Caco-2 (cell line): ENCODE measurements at regions of chr12 and their contacts with region 1.

Region 1: DNA sequence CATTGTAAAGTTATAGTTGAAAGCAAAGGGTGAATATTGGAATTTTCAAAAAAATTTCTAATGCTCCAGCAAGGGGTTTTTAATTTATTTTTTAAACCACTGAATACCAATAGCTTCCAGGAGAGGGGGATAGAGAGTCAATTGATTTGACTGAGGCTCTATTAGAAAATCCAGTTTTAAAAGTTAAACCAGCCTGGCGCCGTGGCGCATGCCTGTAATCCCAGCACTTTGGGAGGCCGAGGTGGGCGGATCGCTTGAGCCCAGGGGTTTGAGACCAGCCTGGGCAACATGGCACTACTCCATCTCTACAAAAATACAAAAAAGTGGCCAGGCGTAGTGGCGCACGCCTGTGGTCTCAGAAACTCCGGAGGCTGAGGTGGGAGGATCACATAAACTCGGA is 150.1 kb downstream of the SLC38A4 start:
- DNase-seq: peak in 1 of 2 experiments; percentile 66
- H3K4me3 ChIP-seq: no peak overlapping the region
- H3K4me3 Mint-ChIP-seq: no peak overlapping the region
- H3K27ac Mint-ChIP-seq: no peak overlapping the region
- H3K4me1 ChIP-seq: peaks cover 7% of the 10 kb centered on the region; the same call in 1 of the 2 replicates
- H3K4me1 Mint-ChIP-seq: peaks cover 7% of the 10 kb centered on the region
- H3K27me3 ChIP-seq: no peaks in the 10 kb centered on the region; the same call in 1 of the 2 replicates
- H3K27me3 Mint-ChIP-seq: no peaks in the 10 kb centered on the region
- CTCF ChIP-seq: peak; percentile 64 to 88

Region 2: DNA sequence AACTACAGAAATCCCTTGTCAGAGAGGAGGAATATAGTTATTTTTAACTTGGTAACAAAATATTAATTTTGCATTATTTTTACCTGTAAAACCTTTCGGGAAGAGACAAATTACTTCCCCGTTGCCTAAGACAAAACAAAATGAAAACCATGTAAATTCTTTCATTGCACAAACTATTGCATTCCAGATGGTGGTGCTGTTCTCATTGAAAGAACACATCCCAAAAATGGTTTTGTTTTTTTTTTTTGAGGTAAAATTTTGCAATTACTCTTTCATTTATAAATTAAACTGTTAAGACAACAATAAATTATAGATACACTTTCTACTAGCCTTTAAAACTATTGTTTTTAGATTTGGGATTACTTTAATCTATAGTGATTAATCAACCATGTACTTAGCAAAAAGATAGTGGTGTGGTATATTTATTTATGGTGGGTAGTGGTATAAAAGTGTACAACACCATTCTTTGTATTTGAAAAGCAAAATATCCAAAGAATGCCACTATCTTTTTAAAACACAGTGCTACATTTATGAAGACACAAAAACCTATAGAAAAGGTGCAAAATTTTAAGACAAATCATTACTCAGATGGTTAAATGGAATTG is 522.4 kb before region 1 on chr12:
- CTCF ChIA-PET with region 1: no interaction called
- POLR2A ChIA-PET with region 1: no interaction called
- intact Hi-C with region 1: loop called (anchors 5 kb)
- DNase-seq: no peak
- H3K4me3 ChIP-seq: no peak overlapping the region
- H3K4me3 Mint-ChIP-seq: no peak overlapping the region
- H3K27ac Mint-ChIP-seq: no peak overlapping the region
- H3K4me1 ChIP-seq: 0 out of 2 replicates have a peak, but pooled peaks cover 5% of the 10 kb centered on the region
- H3K4me1 Mint-ChIP-seq: peaks cover 17% of the 10 kb centered on the region
- H3K27me3 ChIP-seq: no peaks in the 10 kb centered on the region
- H3K27me3 Mint-ChIP-seq: peaks cover 9% of the 10 kb centered on the region
- CTCF ChIP-seq: peak; percentile 53 to 70

Region 3: GRCh38 chr12:46722394-46723185 is 46.9 kb after region 1 on chr12:
- CTCF ChIA-PET with region 1: no interaction called
- POLR2A ChIA-PET with region 1: no interaction called
- intact Hi-C with region 1: no loop called
- DNase-seq: no peak
- H3K4me3 ChIP-seq: no peak overlapping the region
- H3K4me3 Mint-ChIP-seq: no peak overlapping the region
- H3K27ac Mint-ChIP-seq: no peak overlapping the region
- H3K4me1 ChIP-seq: no peaks in the 10 kb centered on the region
- H3K4me1 Mint-ChIP-seq: no peaks in the 10 kb centered on the region
- H3K27me3 ChIP-seq: no peaks in the 10 kb centered on the region
- H3K27me3 Mint-ChIP-seq: no peaks in the 10 kb centered on the region
- CTCF ChIP-seq: no peak

Region 4: GRCh38 chr12:46825591-46826414 is 150.1 kb after region 1 on chr12 and contains the start of gene SLC38A4:
- CTCF ChIA-PET with region 1: interaction called, 3 read pairs
- POLR2A ChIA-PET with region 1: no interaction called
- intact Hi-C with region 1: loop called (anchors 5 kb)
- DNase-seq: peak; percentile 67 to 84
- H3K4me3 ChIP-seq: peak within 1 kb of the TSS; percentile 65
- H3K4me3 Mint-ChIP-seq: peak within 1 kb of the TSS; percentile 77
- H3K27ac Mint-ChIP-seq: peak within 1 kb of the TSS; percentile 11
- H3K4me1 ChIP-seq: no peaks in the 10 kb centered on the region; the same call in 1 of the 2 replicates
- H3K4me1 Mint-ChIP-seq: peaks cover 21% of the 10 kb centered on the region
- H3K27me3 ChIP-seq: no peaks in the 10 kb centered on the region
- H3K27me3 Mint-ChIP-seq: no peaks in the 10 kb centered on the region
- CTCF ChIP-seq: peak in 1 of 2 experiments; percentile 56
- total RNA-seq, gene SLC38A4: 16.0 and 20.1 TPM in 2 replicates

Region 5: GRCh38 chr12:46983393-46984266 is 307.9 kb after region 1 on chr12:
- CTCF ChIA-PET with region 1: interaction called, 3 read pairs
- POLR2A ChIA-PET with region 1: no interaction called
- intact Hi-C with region 1: loop called (anchors 1 kb)
- DNase-seq: peak; percentile 65 to 66
- H3K4me3 ChIP-seq: no peak overlapping the region
- H3K4me3 Mint-ChIP-seq: no peak overlapping the region
- H3K27ac Mint-ChIP-seq: no peak overlapping the region
- H3K4me1 ChIP-seq: peaks cover 24% of the 10 kb centered on the region
- H3K4me1 Mint-ChIP-seq: peaks cover 18% of the 10 kb centered on the region
- H3K27me3 ChIP-seq: no peaks in the 10 kb centered on the region
- H3K27me3 Mint-ChIP-seq: no peaks in the 10 kb centered on the region
- CTCF ChIP-seq: peak; percentile 64 to 75